ENCODE measurements at regions of chr5 and their contacts with region 1.

Region 1: DNA sequence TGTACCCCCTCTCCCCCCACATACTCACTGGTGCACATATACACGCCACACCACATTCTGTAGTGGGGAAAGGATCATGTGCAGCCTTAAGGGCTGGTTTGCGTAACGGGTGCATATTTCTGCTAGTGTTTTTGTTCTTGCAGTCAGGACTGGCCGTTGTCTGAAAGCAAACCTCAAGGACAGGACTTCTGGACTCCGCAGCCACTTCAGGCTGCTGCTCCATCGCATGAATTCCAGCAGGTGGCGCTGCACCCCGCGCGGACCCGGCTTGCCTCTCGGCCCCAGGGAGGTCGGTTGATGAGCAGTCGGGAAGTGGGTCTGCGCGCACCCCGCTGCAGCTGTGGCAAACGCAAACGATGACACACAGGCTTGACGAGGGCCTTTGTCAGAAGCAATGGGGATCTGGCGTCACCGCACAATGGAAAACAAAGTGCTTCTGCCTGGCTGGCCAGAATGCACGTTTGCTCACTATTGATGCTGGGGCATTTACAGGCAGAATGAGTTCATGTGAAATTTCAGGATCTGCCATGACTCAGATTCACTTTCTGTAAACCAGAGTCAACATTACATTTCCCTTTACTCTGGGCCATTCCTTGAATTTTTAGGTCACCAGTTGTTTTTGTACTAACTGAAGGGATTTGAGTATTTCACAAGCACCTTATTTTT is 36.3 kb upstream of the GLRX start:
- DNase-seq: peak; percentile 98
- H3K4me3 Mint-ChIP-seq: peak overlapping the region; percentile 30
- H3K27ac Mint-ChIP-seq: peak overlapping the region; percentile 83
- H3K4me1 Mint-ChIP-seq: peaks cover 52% of the 10 kb centered on the region
- H3K27me3 Mint-ChIP-seq: no peaks in the 10 kb centered on the region

Region 2: GRCh38 chr5:95401626-95402025 is 457.2 kb before region 1 on chr5:
- CTCF ChIA-PET with region 1: no interaction called
- intact Hi-C with region 1: no loop called
- DNase-seq: no peak
- H3K4me3 Mint-ChIP-seq: no peak overlapping the region
- H3K27ac Mint-ChIP-seq: no peak overlapping the region
- H3K4me1 Mint-ChIP-seq: no peaks in the 10 kb centered on the region
- H3K27me3 Mint-ChIP-seq: peaks cover 11% of the 10 kb centered on the region

Region 3: GRCh38 chr5:95883613-95884325 is 25.0 kb after region 1 on chr5:
- CTCF ChIA-PET with region 1: interaction called, 3 read pairs
- intact Hi-C with region 1: loop called (anchors 2 kb)
- DNase-seq: no peak
- H3K4me3 Mint-ChIP-seq: no peak overlapping the region
- H3K27ac Mint-ChIP-seq: no peak overlapping the region
- H3K4me1 Mint-ChIP-seq: peaks cover 4% of the 10 kb centered on the region
- H3K27me3 Mint-ChIP-seq: no peaks in the 10 kb centered on the region

Region 4: DNA sequence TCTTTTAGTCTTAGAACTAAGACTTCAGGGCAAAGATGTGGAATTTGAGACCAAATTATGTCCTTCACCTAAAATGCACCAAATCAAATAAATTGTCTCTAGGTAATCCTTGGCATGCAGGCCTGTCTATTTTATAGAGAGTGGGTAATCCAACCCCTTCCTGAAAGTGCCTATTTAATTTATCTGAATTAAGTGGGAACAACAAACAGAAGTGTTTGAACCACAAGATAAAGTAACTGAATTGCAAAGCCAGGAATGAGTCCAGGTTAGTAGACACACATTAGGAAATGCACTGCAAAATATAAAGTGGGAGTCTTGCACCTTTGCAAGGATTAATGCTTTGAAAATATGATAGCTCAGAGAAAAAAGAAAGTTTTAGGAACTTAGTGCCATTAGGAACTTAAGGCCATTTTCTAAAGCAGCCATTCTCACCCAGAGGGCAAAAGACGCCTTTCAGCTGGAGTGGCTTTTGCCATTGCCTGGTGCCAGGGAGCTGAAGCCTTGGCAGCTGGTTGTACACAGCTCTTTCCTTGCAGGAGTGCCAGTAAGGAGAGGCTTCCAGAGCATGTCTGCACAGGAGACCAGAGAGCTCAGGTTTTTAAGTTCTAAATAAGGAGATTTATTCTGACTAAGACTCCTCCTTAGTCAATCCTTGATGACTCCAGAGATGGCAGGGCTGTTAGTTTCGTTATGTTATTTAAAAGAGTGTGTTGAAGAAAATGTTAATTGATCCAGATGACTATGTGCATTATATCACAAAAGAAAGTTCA is 254.6 kb after region 1 on chr5:
- CTCF ChIA-PET with region 1: no interaction called
- intact Hi-C with region 1: loop called (anchors 1 kb)
- DNase-seq: peak; percentile 19
- H3K4me3 Mint-ChIP-seq: no peak overlapping the region
- H3K27ac Mint-ChIP-seq: peak overlapping the region; percentile 77
- H3K4me1 Mint-ChIP-seq: peaks cover 28% of the 10 kb centered on the region
- H3K27me3 Mint-ChIP-seq: peaks cover 4% of the 10 kb centered on the region

Region 5: DNA sequence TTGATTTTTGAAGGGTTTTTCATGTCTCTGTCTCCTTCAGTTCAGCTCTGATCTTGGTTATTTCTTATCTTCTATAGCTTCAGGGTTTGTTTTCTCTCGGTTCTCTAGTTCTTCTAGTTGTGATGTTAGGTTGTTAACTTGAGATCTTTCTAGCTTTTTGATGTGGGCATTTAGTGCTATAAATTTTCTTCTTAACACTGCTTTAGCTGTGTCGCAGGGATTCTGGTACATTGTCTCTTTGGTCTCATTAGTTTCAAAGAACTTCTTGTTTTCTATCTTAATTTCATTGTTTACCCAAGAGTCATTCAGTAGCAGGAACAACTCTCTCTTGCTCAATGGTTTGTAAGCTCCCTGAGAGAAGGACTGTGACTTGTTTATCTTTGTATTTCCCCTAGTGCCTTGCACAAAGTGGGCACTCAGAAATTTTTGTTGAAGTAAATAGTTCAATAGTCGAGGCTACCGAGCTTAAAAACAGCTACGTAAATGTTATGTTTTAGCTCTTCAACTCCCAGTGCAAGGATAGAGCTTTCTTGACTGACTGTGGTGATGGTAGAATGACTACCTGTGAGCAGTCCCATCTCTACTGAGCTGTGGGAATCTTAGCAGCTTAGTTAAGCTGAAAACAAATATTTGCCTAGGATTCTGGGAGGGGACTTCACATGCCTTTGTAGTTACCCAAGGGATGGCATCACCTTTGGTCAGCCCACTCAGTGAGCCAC is 328.7 kb after region 1 on chr5:
- CTCF ChIA-PET with region 1: no interaction called
- intact Hi-C with region 1: no loop called
- DNase-seq: no peak
- H3K4me3 Mint-ChIP-seq: no peak overlapping the region
- H3K27ac Mint-ChIP-seq: no peak overlapping the region
- H3K4me1 Mint-ChIP-seq: no peaks in the 10 kb centered on the region
- H3K27me3 Mint-ChIP-seq: peaks cover 16% of the 10 kb centered on the region

Region 6: GRCh38 chr5:96279801-96280542 is 421.2 kb after region 1 on chr5:
- CTCF ChIA-PET with region 1: no interaction called
- intact Hi-C with region 1: loop called (anchors 1 kb)
- DNase-seq: peak; percentile 37
- H3K4me3 Mint-ChIP-seq: no peak overlapping the region
- H3K27ac Mint-ChIP-seq: peak overlapping the region; percentile 31
- H3K4me1 Mint-ChIP-seq: peaks cover 13% of the 10 kb centered on the region
- H3K27me3 Mint-ChIP-seq: peaks cover 26% of the 10 kb centered on the region

Region 7: DNA sequence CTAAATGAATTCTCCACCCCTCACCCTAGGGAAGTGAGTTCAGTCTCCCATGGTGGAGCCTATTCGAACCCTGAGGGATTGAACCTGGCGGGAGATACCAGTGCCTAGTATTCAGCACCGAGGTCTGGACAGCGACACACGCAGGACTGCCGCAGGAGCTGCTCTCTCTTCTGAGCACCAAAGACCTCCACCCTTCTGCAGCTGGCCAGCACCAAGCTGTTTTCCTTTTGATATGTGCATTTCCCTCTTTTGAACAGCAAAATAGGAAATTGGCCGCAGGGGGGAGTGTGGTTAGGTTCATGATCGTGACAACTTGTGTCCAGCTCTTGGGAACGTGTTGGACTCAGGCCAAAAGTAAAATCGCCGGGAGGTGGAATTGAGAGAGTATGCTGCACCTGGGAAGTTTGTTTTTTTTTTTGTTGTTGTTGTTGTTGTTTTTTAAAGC is 575.4 kb after region 1 on chr5:
- CTCF ChIA-PET with region 1: no interaction called
- intact Hi-C with region 1: loop called (anchors 10 kb)
- DNase-seq: peak; percentile 78
- H3K4me3 Mint-ChIP-seq: no peak overlapping the region
- H3K27ac Mint-ChIP-seq: no peak overlapping the region
- H3K4me1 Mint-ChIP-seq: peaks cover 14% of the 10 kb centered on the region
- H3K27me3 Mint-ChIP-seq: peaks cover 70% of the 10 kb centered on the region

Region 8: GRCh38 chr5:96601811-96602244 is 743.0 kb after region 1 on chr5:
- CTCF ChIA-PET with region 1: interaction called, 8 read pairs
- intact Hi-C with region 1: loop called (anchors 1 kb)
- DNase-seq: peak; percentile 68
- H3K4me3 Mint-ChIP-seq: no peak overlapping the region
- H3K27ac Mint-ChIP-seq: no peak overlapping the region
- H3K4me1 Mint-ChIP-seq: peaks cover 10% of the 10 kb centered on the region
- H3K27me3 Mint-ChIP-seq: peaks cover 5% of the 10 kb centered on the region

Measured in activated naive CD4-positive, alpha-beta T cell treated with anti-CD3 and anti-CD28 coated beads for 36 hours (primary cell).